A549 (cell line): ENCODE measurements at regions of chr1 and their contacts with region 1.

Region 1: GRCh38 chr1:62175568-62176179 is 19.0 kb upstream of the L1TD1 start:
- DNase-seq: peak in 1 of 2 experiments; percentile 41
- ATAC-seq: peak; percentile 64 to 74; a peak in 5 of 6 replicates
- H3K4me3 ChIP-seq: no peak overlapping the region
- H3K27ac ChIP-seq: no peak overlapping the region
- H3K4me1 ChIP-seq: no peaks in the 10 kb centered on the region
- CTCF ChIP-seq: peak; percentile 75
- EP300 ChIP-seq: no peak
- POLR2A ChIP-seq: no peak
- RAD21 ChIP-seq: peak; percentile 88 to 90

Region 2: GRCh38 chr1:61941794-61942193 is 233.9 kb before region 1 on chr1:
- CTCF ChIA-PET with region 1: no interaction called
- POLR2A ChIA-PET with region 1: no interaction called
- DNase-seq: no peak
- ATAC-seq: no peak
- H3K4me3 ChIP-seq: no peak overlapping the region
- H3K27ac ChIP-seq: no peak overlapping the region
- H3K4me1 ChIP-seq: no peaks in the 10 kb centered on the region
- CTCF ChIP-seq: no peak
- EP300 ChIP-seq: no peak
- POLR2A ChIP-seq: no peak
- RAD21 ChIP-seq: no peak

Region 3: GRCh38 chr1:62398377-62398776 is 222.7 kb after region 1 on chr1:
- CTCF ChIA-PET with region 1: interaction called, 141 read pairs
- POLR2A ChIA-PET with region 1: no interaction called
- DNase-seq: no peak
- ATAC-seq: no peak
- H3K4me3 ChIP-seq: no peak overlapping the region
- H3K27ac ChIP-seq: no peak overlapping the region
- H3K4me1 ChIP-seq: no peaks in the 10 kb centered on the region
- CTCF ChIP-seq: no peak
- EP300 ChIP-seq: no peak
- POLR2A ChIP-seq: no peak
- RAD21 ChIP-seq: no peak

Region 4: GRCh38 chr1:62407405-62408009 is 231.8 kb after region 1 on chr1:
- CTCF ChIA-PET with region 1: interaction called, 141 read pairs
- POLR2A ChIA-PET with region 1: no interaction called
- DNase-seq: peak; percentile 18 to 46
- ATAC-seq: peak; percentile 50 to 80; a peak in 4 of 6 replicates
- H3K4me3 ChIP-seq: no peak overlapping the region
- H3K27ac ChIP-seq: no peak overlapping the region
- H3K4me1 ChIP-seq: no peaks in the 10 kb centered on the region
- CTCF ChIP-seq: peak; percentile 80
- EP300 ChIP-seq: no peak
- POLR2A ChIP-seq: no peak
- RAD21 ChIP-seq: peak; percentile 87 to 90

Region 5: DNA sequence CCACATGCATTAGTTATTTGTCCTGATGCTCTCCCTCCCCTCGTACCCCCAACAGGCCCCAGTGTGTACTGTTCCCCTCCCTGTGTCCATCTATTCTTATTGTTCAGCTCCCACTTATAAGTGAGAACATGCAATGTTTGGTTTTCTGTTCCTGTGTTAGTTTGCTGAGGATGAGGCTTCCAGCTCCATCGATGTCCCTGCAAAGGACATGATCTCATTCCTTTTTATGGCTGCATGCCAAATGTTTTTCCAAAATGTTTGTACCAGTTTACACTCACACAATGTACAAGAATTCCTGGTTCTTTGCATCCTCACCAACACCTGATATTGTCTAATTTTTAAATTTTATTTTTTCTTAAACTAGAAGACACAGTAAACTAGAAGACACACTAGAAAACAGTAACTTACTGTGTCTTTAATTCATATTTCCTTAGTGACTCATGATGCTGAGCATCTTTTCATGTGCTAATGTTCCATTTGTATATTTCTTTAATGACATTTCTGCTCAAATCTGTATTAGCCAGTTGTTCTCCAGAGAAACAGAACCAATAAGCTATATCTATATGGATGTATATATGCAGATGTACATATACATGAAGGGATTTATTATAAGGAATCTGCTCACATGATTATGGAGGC is 241.8 kb after region 1 on chr1:
- CTCF ChIA-PET with region 1: interaction called, 19 read pairs
- POLR2A ChIA-PET with region 1: no interaction called
- DNase-seq: no peak
- ATAC-seq: no peak
- H3K4me3 ChIP-seq: no peak overlapping the region
- H3K27ac ChIP-seq: no peak overlapping the region
- H3K4me1 ChIP-seq: no peaks in the 10 kb centered on the region
- CTCF ChIP-seq: no peak
- EP300 ChIP-seq: no peak
- POLR2A ChIP-seq: no peak
- RAD21 ChIP-seq: no peak